Left lung (tissue), 14 donors: ENCODE measurements at regions of chr4 and their contacts with region 1.

Region 1: GRCh38 chr4:89434364-89434988 is 126.9 kb upstream of the GPRIN3 start:
- DNase-seq: peak in 2 of 4 donors; percentile 14 to 44
- ATAC-seq: peak; percentile 83
- H3K4me3 ChIP-seq: no peak overlapping the region
- H3K27ac ChIP-seq: no peak overlapping the region
- H3K4me1 ChIP-seq: no peaks in the 10 kb centered on the region
- H3K27me3 ChIP-seq: no peaks in the 10 kb centered on the region
- CTCF ChIP-seq: peak; percentile 63 to 78

Region 2: DNA sequence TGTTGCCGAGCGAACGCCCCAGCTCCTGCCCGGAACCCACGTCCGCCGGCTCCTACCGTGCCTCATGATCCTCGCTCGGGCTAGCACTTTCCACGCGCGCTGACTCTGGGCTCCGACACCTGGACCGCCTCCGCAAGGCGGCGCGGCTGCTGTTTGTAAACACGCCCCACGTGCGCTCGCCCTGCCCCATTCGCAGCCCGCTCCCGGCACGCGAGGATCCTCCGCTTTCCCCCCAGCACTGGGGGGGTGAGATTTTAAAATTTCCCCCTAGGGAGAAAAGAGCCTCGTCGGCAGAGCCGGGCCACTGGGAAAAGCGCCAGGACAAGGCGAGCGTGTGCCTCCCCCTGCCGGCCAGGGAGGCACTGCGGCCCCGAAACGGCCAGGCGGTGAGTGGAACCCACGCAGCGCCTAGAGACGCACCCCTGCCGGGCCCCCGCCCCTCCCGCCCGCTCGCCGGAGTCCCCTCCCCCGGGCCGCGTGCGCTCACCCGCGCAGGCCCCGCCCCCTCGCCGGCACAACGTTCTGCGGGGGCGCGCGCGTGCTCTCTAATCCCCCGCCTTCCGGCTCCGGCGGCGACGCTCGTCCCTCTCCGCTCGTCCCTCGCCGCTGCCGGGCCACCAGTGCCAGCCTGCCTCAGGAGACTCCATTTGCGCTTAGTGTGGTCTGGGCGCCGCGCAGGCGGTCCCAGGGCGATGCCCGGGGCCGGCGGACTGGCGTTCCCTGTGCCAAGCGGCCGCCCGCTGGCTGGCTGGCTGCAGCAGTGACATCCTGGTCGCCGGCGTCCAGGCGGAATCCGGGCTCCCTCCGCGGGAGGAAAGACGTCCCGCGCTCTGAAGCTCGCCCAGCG is 323.3 kb before region 1 on chr4 and contains the start of gene TIGD2:
- intact Hi-C with region 1: no loop called
- DNase-seq: peak; percentile 87 to 95 (median 92)
- ATAC-seq: peak; percentile 97
- H3K4me3 ChIP-seq: peak within 1 kb of the TSS; percentile 71 to 86
- H3K27ac ChIP-seq: peak within 1 kb of the TSS; percentile 85 to 88
- H3K4me1 ChIP-seq: peaks cover 5 to 19% of the 10 kb centered on the region in 2 donors
- H3K27me3 ChIP-seq: peaks cover 0 to 20% of the 10 kb centered on the region in 2 donors
- CTCF ChIP-seq: peak; percentile 71 to 87
- polyA plus RNA-seq, gene TIGD2: 9.0 to 11.4 (median 10.1) TPM

Region 3: GRCh38 chr4:89164400-89164799 is 270.1 kb before region 1 on chr4:
- intact Hi-C with region 1: loop called in 1 of 2 experiments (anchors 10 kb)
- DNase-seq: no peak
- ATAC-seq: no peak
- H3K4me3 ChIP-seq: no peak overlapping the region
- H3K27ac ChIP-seq: no peak overlapping the region
- H3K4me1 ChIP-seq: no peaks in the 10 kb centered on the region
- H3K27me3 ChIP-seq: no peaks in the 10 kb centered on the region
- CTCF ChIP-seq: no peak

Region 4: GRCh38 chr4:89226665-89227574 is 207.6 kb before region 1 on chr4:
- intact Hi-C with region 1: loop called in 1 of 2 experiments (anchors 5 kb)
- DNase-seq: peak in 3 of 4 donors; percentile 60 to 81 (median 76)
- ATAC-seq: peak; percentile 100
- H3K4me3 ChIP-seq: no peak overlapping the region
- H3K27ac ChIP-seq: no peak overlapping the region
- H3K4me1 ChIP-seq: no peaks in the 10 kb centered on the region
- H3K27me3 ChIP-seq: no peaks in the 10 kb centered on the region
- CTCF ChIP-seq: peak; percentile 72 to 75

Region 5: DNA sequence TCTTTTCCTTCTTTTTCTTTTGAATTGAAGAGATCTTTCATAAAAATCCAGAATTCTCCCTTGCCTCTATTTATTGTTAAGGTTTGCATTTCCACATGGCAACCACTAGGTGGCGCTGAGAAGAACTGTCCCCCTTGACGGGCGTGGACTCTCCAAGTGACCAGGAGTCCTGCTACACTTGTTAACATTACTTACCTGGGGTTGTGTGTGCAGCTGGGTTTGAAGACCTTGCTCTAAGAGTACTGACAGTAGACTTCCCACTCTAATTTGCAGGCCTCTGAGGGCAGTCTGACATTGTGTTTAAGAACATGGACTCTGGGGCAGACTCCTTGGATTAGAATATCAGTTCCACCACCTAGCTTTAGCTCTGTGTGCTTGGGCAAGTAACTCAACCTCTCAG is 179.6 kb before region 1 on chr4:
- intact Hi-C with region 1: loop called in 1 of 2 experiments (anchors 10 kb)
- DNase-seq: peak in 1 of 4 donors; percentile 39
- ATAC-seq: peak; percentile 90
- H3K4me3 ChIP-seq: no peak overlapping the region
- H3K27ac ChIP-seq: no peak overlapping the region
- H3K4me1 ChIP-seq: no peaks in the 10 kb centered on the region
- H3K27me3 ChIP-seq: no peaks in the 10 kb centered on the region
- CTCF ChIP-seq: peak; percentile 71 to 74

Region 6: DNA sequence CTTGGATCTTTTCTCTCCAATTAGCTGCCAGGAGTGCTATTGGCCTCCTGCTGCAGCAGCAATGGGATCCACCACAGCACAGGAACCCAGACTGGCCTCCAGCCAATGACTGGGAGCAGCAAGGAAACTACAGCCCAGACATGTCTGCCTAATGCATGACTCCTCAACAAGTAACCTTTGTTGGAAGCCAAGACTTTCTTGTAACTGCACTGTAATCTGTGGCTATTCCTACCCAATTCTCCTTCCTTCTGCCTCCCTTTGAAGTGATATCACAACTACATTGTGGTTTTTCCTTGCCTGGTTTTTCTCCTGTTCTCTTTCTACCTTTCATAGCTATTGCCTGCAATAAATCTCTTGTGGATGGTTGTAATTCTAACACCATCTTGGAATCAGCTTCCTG is 362.6 kb after region 1 on chr4:
- intact Hi-C with region 1: no loop called
- DNase-seq: no peak
- ATAC-seq: no peak
- H3K4me3 ChIP-seq: no peak overlapping the region
- H3K27ac ChIP-seq: no peak overlapping the region
- H3K4me1 ChIP-seq: no peaks in the 10 kb centered on the region
- H3K27me3 ChIP-seq: no peaks in the 10 kb centered on the region
- CTCF ChIP-seq: no peak